ENCODE measurements at regions of chr11 and their contacts with region 1.

Region 1: DNA sequence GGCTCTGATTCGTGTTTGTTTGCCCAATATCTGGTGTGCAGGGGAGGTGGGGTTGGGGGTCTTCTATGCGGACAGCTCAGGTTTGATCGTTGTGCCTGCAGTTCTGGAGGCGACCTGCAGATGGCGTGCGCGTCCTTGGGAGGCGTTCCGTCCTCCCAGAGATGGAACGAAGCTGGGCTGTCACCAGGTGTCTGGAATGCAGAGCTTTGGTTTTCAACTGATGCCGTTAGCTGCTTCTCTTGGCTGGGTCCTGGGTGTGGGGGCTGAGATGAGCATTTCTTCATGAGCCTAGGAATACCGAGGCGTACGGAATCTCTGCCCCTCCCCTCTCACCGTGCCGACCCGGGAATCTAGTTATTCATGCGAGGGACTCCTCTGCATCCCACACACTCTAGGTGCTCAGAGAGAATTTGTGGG is 98.6 kb downstream of the CEP164 start:
- DNase-seq: peak; percentile 80
- H3K4me3 Mint-ChIP-seq: no peak overlapping the region
- H3K27ac Mint-ChIP-seq: no peak overlapping the region
- H3K4me1 Mint-ChIP-seq: peaks cover 4% of the 10 kb centered on the region
- H3K27me3 Mint-ChIP-seq: no peaks in the 10 kb centered on the region

Region 2: GRCh38 chr11:117256573-117256972 is 169.7 kb before region 1 on chr11:
- CTCF ChIA-PET with region 1: no interaction called
- POLR2A ChIA-PET with region 1: no interaction called
- intact Hi-C with region 1: no loop called
- DNase-seq: no peak
- H3K4me3 Mint-ChIP-seq: no peak overlapping the region
- H3K27ac Mint-ChIP-seq: no peak overlapping the region
- H3K4me1 Mint-ChIP-seq: no peaks in the 10 kb centered on the region
- H3K27me3 Mint-ChIP-seq: no peaks in the 10 kb centered on the region

Region 3: GRCh38 chr11:117443266-117444195 is 17.3 kb after region 1 on chr11:
- CTCF ChIA-PET with region 1: interaction called, 32 read pairs
- POLR2A ChIA-PET with region 1: no interaction called
- intact Hi-C with region 1: no loop called
- DNase-seq: peak; percentile 66
- H3K4me3 Mint-ChIP-seq: no peak overlapping the region
- H3K27ac Mint-ChIP-seq: no peak overlapping the region
- H3K4me1 Mint-ChIP-seq: no peaks in the 10 kb centered on the region
- H3K27me3 Mint-ChIP-seq: peaks cover 32% of the 10 kb centered on the region

Region 4: DNA sequence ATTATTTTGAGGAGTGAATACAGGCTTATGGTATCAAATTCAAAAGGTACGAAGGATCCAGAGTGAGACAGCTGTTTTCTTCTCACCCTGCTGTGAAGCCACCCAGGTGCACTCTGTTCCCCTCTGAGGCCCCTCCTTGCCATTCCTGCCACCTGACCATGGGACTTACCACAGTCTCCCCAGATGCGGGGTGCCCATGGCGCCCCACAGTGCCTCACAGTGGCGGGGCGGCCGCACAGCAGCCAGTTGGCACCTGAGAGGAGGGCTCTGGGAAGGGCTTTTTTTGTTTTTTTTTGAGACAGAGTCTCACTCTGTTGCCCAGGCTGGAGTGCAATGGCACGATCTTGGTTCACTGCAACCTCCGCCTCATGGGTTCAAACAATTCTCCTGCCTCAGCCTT is 53.1 kb after region 1 on chr11:
- CTCF ChIA-PET with region 1: interaction called, 52 read pairs
- POLR2A ChIA-PET with region 1: no interaction called
- intact Hi-C with region 1: loop called (anchors 1 kb)
- DNase-seq: peak; percentile 54
- H3K4me3 Mint-ChIP-seq: no peak overlapping the region
- H3K27ac Mint-ChIP-seq: no peak overlapping the region
- H3K4me1 Mint-ChIP-seq: no peaks in the 10 kb centered on the region
- H3K27me3 Mint-ChIP-seq: peaks cover 7% of the 10 kb centered on the region

Region 5: DNA sequence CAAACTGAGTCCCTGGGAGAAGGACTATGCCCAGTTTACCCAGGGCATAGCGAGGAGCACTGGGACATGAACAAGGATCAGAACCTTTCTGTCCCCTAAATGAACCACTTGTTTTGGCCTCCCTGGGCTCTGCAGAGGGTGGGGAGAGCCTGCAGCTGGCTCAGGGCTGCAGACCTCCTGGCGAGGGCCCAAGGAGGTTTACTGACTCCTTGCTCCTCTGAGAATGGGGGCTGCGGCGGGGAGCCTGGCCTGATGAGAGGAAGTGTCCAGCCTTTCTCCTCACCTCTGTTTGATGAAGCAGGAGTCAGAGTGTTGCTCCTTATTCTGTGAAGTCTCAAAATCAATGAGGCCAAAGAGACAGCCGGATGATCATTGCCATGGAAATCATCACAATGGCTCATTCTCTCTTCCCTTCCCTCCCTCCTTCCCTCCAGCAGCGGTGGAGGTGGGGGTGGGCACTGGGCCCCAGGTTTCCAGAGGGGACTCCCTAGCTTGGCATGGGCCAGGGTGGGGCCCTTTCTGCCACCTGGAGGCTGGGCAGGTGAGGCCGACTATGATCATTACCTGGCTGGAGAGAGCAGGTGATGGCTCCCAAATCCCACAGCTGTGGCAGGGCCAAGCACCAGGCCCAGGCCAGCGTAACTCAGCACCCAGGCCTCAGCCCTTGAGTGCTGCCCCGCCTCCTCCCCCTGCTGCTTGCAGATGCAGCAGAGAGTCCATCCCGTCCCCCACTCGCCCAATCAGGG is 71.1 kb after region 1 on chr11:
- CTCF ChIA-PET with region 1: interaction called, 12 read pairs
- POLR2A ChIA-PET with region 1: no interaction called
- intact Hi-C with region 1: no loop called
- DNase-seq: no peak
- H3K4me3 Mint-ChIP-seq: no peak overlapping the region
- H3K27ac Mint-ChIP-seq: no peak overlapping the region
- H3K4me1 Mint-ChIP-seq: no peaks in the 10 kb centered on the region
- H3K27me3 Mint-ChIP-seq: peaks cover 6% of the 10 kb centered on the region

Region 6: GRCh38 chr11:117519170-117519569 is 92.9 kb after region 1 on chr11:
- CTCF ChIA-PET with region 1: interaction called, 3 read pairs
- POLR2A ChIA-PET with region 1: no interaction called
- intact Hi-C with region 1: loop called (anchors 10 kb)
- DNase-seq: no peak
- H3K4me3 Mint-ChIP-seq: no peak overlapping the region
- H3K27ac Mint-ChIP-seq: no peak overlapping the region
- H3K4me1 Mint-ChIP-seq: no peaks in the 10 kb centered on the region
- H3K27me3 Mint-ChIP-seq: peaks cover 3% of the 10 kb centered on the region

Region 7: DNA sequence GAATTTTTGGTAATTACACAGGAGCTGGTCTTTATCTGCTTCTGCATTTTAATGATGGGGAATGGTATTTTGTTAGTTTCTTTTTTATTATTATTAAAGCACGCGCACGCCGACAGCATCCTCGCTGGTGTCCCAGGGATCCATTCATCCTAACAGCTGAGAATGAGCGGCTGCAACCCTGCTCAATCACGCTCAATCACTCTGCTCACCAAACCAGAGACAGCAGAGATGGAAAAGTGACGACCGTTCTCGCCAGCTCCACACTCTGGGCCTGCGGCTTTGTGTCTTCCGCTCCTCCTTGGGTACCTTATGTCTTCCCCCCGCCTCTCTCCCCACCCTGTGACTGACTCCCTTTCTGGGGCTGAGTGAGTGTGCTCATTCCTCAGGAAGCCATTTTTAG is 286.3 kb after region 1 on chr11:
- CTCF ChIA-PET with region 1: interaction called, 10 read pairs
- POLR2A ChIA-PET with region 1: no interaction called
- intact Hi-C with region 1: no loop called
- DNase-seq: no peak
- H3K4me3 Mint-ChIP-seq: no peak overlapping the region
- H3K27ac Mint-ChIP-seq: no peak overlapping the region
- H3K4me1 Mint-ChIP-seq: no peaks in the 10 kb centered on the region
- H3K27me3 Mint-ChIP-seq: peaks cover 23% of the 10 kb centered on the region

Region 8: DNA sequence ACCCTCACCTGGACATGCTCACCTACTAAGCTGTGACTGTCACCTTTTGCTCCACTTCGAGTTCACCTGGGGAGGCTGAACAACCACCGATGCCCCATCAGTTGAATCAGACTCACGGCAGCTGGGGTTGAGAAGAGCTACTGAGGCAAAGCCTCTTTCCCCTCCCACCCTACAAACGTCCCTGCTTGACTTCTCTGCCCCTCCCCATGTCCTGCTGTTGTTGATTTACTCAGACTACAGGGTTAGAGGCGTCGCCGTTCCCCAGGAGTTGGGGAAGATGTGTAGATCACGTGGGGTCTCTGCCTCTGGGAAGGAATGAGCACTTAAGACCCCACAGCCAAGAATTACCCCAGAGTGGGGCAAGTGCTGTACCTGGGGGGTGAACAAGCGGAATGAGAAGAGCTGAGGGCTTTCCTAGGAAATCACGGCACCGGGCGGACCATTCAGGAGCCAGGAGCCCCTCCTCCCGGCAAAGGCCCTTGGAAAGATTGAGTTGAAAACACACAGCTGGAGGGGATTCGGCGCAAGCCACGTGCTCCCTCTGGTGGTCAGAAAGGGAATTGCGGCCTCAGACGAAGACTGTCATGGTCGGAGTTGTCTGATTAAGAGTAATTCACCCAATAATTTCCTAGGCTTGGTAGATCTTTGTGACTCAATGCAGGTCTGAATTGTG is 391.2 kb after region 1 on chr11:
- CTCF ChIA-PET with region 1: interaction called, 46 read pairs
- POLR2A ChIA-PET with region 1: no interaction called
- intact Hi-C with region 1: no loop called
- DNase-seq: peak; percentile 96
- H3K4me3 Mint-ChIP-seq: peak overlapping the region; percentile 42
- H3K27ac Mint-ChIP-seq: peak overlapping the region; percentile 94
- H3K4me1 Mint-ChIP-seq: peaks cover 62% of the 10 kb centered on the region
- H3K27me3 Mint-ChIP-seq: no peaks in the 10 kb centered on the region

Region 9: GRCh38 chr11:118145285-118146227 is 719.3 kb after region 1 on chr11:
- CTCF ChIA-PET with region 1: no interaction called
- POLR2A ChIA-PET with region 1: no interaction called
- intact Hi-C with region 1: no loop called
- DNase-seq: peak; percentile 95
- H3K4me3 Mint-ChIP-seq: peak overlapping the region; percentile 78
- H3K27ac Mint-ChIP-seq: no peak overlapping the region
- H3K4me1 Mint-ChIP-seq: peaks cover 3% of the 10 kb centered on the region
- H3K27me3 Mint-ChIP-seq: peaks cover 39% of the 10 kb centered on the region